Endothelial cell of umbilical vein (primary cell): ENCODE measurements at regions of chr12 and their contacts with region 1.

Region 1: DNA sequence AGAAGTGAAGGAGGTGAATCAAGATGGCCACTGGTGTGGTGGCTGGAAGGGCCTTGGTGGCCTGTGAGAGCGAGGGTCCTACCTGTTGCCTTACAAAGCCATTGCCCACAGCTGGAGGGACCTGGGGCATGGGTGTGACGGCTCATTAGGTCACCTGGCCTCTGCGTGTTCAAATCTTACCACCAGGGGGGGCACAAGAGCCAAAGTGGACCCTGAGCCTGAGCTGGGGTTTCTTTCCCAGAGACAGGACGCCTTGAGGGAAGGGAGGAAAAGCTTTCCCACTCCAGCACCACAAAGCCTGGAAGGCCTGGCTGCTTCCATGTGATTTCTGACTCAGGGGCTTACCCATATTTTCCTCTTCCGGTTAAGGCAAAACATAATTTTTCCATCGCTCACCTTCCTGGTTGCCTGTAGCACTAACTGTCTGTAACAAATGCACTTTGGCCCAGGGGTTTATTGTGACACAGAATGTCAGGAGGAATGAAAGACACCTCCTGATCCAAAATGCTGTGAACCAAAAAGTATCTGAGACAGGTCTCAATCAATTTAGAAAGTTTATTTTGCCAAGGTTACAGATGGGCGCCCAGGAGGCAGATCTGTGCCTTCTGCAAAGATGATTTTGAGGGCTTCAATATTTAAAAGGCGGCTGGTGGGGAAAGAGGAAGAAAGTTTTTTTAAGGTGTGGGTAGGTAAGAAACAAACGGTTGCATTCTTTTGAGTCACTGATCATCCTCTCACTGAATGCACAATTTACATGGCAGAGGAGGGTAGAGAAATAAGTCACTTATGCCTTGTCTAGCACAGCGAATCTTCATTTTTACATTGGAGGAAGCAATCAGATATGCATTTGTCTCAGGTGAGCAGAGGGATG is 4.3 kb upstream of the CD9 start:
- DNase-seq: peak; percentile 97
- H3K4me3 ChIP-seq: no peak overlapping the region
- H3K27ac ChIP-seq: peak overlapping the region; percentile 61
- H3K4me1 ChIP-seq: peaks cover 17% of the 10 kb centered on the region
- H3K27me3 ChIP-seq: no peaks in the 10 kb centered on the region
- CTCF ChIP-seq: peak; percentile 91 to 96
- POLR2A ChIP-seq: peak; percentile 25

Region 2: DNA sequence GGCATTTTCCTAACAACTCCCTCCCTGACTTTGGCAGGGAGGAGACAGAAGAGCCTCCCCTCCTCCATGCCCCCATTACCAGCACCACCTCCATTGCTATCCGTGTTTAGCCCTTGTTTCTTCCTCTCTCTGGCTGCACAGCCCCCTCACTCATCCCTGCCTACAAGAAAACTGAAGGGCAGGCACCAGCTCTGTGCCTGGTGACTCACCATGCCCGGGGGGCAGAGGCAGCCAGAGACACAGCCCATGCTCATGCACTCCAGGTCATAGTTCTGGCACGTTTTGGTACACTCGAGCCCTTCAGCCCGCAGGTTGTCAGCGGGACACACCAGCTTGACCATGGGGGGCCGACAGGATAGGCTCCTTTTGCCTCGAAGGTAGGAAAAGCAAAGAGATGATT is 151.8 kb before region 1 on chr12:
- CTCF ChIA-PET with region 1: no interaction called
- POLR2A ChIA-PET with region 1: no interaction called
- dilution Hi-C with region 1: no loop called
- intact Hi-C with region 1: no loop called
- DNase-seq: no peak
- H3K4me3 ChIP-seq: no peak overlapping the region
- H3K27ac ChIP-seq: no peak overlapping the region
- H3K4me1 ChIP-seq: no peaks in the 10 kb centered on the region
- H3K27me3 ChIP-seq: no peaks in the 10 kb centered on the region
- CTCF ChIP-seq: no peak
- POLR2A ChIP-seq: no peak

Region 3: GRCh38 chr12:6056406-6057240 is 139.3 kb before region 1 on chr12:
- CTCF ChIA-PET with region 1: interaction called, 10 read pairs
- POLR2A ChIA-PET with region 1: no interaction called
- dilution Hi-C with region 1: no loop called
- intact Hi-C with region 1: no loop called
- DNase-seq: no peak
- H3K4me3 ChIP-seq: no peak overlapping the region
- H3K27ac ChIP-seq: no peak overlapping the region
- H3K4me1 ChIP-seq: peaks cover 38% of the 10 kb centered on the region
- H3K27me3 ChIP-seq: no peaks in the 10 kb centered on the region
- CTCF ChIP-seq: peak; percentile 25 to 52
- POLR2A ChIP-seq: no peak

Region 4: DNA sequence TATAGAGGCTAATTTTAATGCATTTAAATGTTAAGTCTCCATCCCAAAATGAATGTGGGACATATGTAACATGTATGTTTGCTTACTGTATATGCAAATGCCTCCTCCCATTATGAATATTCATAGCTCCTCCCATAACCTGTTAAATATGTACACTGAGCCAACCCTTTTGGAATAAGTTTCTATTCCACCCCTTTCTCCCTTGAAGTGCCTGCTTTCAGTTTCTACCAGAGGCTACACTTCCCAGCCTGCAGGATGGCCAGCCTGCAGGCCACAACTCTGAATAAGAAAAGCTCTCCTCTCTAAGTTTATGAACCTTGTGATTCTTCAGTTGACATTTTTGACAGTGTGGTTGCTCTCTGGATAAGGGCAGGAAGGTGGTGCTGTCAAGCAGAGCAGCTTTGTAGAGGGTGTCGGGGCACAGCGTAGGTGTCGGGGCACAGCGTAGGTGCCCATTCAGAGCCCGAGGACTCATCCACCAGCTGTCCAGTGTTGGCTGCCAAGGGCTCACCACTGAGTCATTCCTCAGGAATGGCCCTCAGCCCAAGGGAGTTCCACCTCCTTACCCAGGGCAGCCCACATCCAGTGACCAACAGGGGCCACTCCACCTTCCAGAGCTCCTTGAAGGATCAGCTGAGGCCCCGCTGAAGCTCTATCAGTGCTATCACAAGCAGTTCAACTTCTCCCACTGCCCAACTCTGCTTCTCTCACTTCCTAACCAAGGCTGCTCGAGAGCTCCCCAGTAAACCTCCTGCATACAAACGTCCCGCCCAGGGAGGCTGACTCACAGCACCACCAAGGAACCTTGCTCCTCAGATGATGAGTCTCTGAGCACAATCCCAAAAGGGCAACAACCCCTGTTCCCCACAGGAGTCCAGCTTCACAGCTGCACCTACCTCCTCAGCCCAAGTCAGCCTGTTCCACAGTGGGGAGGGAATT is 102.8 kb before region 1 on chr12:
- CTCF ChIA-PET with region 1: interaction called, 16 read pairs
- POLR2A ChIA-PET with region 1: no interaction called
- dilution Hi-C with region 1: no loop called
- intact Hi-C with region 1: no loop called
- DNase-seq: peak; percentile 92
- H3K4me3 ChIP-seq: no peak overlapping the region
- H3K27ac ChIP-seq: peak overlapping the region; percentile 60
- H3K4me1 ChIP-seq: peaks cover 87% of the 10 kb centered on the region
- H3K27me3 ChIP-seq: no peaks in the 10 kb centered on the region
- CTCF ChIP-seq: peak in 1 of 2 donors; percentile 14
- POLR2A ChIP-seq: no peak

Region 5: GRCh38 chr12:6182116-6182898 is 13.6 kb before region 1 on chr12:
- CTCF ChIA-PET with region 1: interaction called, 19 read pairs
- POLR2A ChIA-PET with region 1: interaction called, 3 read pairs
- dilution Hi-C with region 1: no loop called
- intact Hi-C with region 1: loop called (anchors 1 kb)
- DNase-seq: peak; percentile 89
- H3K4me3 ChIP-seq: no peak overlapping the region
- H3K27ac ChIP-seq: peak overlapping the region; percentile 96
- H3K4me1 ChIP-seq: peaks cover 53% of the 10 kb centered on the region
- H3K27me3 ChIP-seq: no peaks in the 10 kb centered on the region
- CTCF ChIP-seq: no peak
- POLR2A ChIP-seq: peak; percentile 52

Region 6: DNA sequence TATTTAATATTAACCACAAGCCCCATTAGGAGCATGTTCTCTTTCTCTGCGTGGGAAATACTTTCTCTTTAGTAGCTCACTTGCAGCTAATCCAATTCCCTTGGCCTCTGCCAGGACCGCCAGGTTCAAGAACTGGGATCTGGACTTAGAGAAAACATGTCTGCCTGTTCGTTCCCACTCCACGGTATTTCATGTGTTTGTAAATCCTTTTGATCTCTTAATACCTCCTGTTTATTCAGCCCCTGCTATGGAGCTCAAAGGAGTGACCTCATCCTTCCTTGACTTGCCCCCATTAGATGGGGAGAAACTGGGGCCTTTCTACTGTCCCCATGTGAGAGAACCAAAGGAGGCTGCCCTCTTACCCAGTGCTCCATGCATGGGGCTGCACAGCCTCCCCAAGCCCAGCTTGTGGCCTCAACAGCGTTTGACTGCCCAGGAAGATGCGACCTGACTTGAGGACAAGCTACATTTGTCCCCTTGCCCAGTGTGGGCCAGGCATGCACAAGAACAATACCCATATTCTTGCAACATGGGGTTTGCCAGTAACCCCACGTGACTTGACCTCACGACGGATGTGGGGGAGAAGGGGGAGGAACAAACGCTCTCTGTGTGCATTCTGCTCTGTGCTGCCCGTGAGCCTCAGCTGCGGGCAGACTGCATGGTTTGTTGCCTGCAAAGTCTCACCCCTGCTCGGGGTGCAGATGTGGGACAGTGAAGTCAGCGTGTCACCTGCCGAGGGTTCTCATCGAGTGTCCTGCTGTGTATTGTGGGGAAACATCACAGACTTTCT is 34.6 kb after region 1 on chr12:
- CTCF ChIA-PET with region 1: interaction called, 27 read pairs
- POLR2A ChIA-PET with region 1: no interaction called
- dilution Hi-C with region 1: no loop called
- intact Hi-C with region 1: loop called (anchors 2 kb)
- DNase-seq: no peak
- H3K4me3 ChIP-seq: no peak overlapping the region
- H3K27ac ChIP-seq: peak overlapping the region; percentile 42
- H3K4me1 ChIP-seq: peaks cover 74% of the 10 kb centered on the region
- H3K27me3 ChIP-seq: no peaks in the 10 kb centered on the region
- CTCF ChIP-seq: no peak
- POLR2A ChIP-seq: peak; percentile 2

Region 7: DNA sequence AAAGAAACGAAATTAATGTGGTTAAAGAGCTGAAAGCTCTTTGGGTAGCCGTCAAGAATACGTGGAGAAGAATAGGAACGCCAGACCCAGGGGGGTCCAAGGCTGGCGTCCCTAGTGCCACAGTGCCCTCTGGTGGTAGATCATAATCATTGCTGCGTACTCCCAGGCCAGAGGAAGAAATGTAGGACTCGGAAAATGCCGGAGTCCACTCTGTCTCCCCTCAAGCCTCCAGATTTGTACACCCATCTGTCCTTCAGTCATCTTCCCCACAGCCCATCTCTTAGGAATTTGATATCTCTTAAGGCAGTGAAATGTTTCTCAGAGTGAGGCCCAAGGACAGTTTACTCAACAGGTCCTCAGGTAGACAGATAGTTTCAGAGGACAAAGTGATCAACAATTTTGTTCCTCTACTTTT is 89.2 kb after region 1 on chr12:
- CTCF ChIA-PET with region 1: interaction called, 146 read pairs
- POLR2A ChIA-PET with region 1: interaction called, 5 read pairs
- dilution Hi-C with region 1: no loop called
- intact Hi-C with region 1: loop called (anchors 1 kb)
- DNase-seq: peak; percentile 76
- H3K4me3 ChIP-seq: no peak overlapping the region
- H3K27ac ChIP-seq: peak overlapping the region; percentile 63
- H3K4me1 ChIP-seq: peaks cover 28% of the 10 kb centered on the region
- H3K27me3 ChIP-seq: no peaks in the 10 kb centered on the region
- CTCF ChIP-seq: peak; percentile 81 to 91
- POLR2A ChIP-seq: no peak

Region 8: DNA sequence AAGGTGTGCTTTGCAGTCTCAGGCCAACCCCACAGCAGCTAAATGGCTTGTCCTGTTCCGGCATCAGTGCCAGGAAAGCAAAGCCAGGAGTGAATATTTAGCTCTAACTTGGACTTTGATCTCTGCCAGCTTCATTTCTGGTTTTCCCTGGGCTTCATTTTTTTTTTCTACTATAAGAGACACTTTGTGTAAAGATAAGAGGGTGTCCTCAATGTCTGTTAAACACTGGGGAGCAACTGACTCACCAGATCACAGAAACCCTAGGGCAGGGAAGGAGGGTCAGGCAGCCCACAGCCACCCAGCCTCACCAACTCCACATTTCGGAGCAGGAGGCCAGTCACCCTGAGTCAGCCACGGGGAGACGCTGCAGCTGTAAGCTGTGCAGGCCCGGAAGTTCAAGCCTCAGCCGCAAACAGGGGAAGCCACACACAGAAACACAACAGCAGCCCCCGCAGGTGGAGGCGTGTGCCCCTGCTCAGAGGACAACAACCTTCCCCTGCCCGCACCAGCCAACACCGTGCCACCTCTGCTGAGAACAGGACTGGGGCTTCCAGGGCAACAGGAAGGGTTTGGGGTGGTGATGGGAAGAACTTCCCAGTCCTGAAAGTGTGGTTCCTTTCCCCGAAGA is 139.7 kb after region 1 on chr12:
- CTCF ChIA-PET with region 1: no interaction called
- POLR2A ChIA-PET with region 1: no interaction called
- dilution Hi-C with region 1: no loop called
- intact Hi-C with region 1: no loop called
- DNase-seq: peak; percentile 85
- H3K4me3 ChIP-seq: peak overlapping the region in 2 of 3 experiments; percentile 1 to 37
- H3K27ac ChIP-seq: peak overlapping the region; percentile 92
- H3K4me1 ChIP-seq: peaks cover 63% of the 10 kb centered on the region
- H3K27me3 ChIP-seq: no peaks in the 10 kb centered on the region
- CTCF ChIP-seq: peak; percentile 70 to 71
- POLR2A ChIP-seq: no peak